ENCODE measurements at regions of chr1 and their contacts with region 1.

Region 1: DNA sequence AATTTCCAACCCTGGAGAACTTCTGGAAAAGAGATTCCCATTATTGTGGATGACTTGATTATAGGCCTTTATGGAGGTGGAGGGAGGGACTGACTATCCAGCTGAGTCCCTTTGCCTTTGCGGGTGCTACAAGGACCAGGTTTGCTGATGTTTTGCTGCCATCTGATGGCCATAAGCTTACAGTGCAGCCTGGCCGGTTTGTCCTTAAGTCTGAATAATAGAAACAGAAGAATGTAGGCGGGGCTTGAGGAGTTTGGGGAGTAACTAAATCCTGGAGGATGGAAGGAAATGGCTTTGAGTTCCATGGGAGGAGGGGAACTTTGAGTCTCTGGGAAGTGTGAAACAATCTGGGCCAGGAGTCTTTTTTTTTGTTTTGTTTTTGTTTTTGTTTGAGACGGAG is 55.7 kb upstream of the CD1D start:
- DNase-seq: peak; percentile 95 to 96
- H3K4me3 ChIP-seq: no peak overlapping the region
- CTCF ChIP-seq: peak in 1 of 3 donors; percentile 77
- POLR2A ChIP-seq: no peak

Region 2: GRCh38 chr1:157969697-157970485 is 155.1 kb before region 1 on chr1:
- intact Hi-C with region 1: loop called (anchors 5 kb)
- DNase-seq: peak in 1 of 2 donors; percentile 20
- H3K4me3 ChIP-seq: no peak overlapping the region
- CTCF ChIP-seq: peak in 1 of 3 donors; percentile 21
- POLR2A ChIP-seq: no peak